Ascending aorta (tissue), 2 donors: ENCODE measurements at regions of chr22 and their contacts with region 1.

Region 1: DNA sequence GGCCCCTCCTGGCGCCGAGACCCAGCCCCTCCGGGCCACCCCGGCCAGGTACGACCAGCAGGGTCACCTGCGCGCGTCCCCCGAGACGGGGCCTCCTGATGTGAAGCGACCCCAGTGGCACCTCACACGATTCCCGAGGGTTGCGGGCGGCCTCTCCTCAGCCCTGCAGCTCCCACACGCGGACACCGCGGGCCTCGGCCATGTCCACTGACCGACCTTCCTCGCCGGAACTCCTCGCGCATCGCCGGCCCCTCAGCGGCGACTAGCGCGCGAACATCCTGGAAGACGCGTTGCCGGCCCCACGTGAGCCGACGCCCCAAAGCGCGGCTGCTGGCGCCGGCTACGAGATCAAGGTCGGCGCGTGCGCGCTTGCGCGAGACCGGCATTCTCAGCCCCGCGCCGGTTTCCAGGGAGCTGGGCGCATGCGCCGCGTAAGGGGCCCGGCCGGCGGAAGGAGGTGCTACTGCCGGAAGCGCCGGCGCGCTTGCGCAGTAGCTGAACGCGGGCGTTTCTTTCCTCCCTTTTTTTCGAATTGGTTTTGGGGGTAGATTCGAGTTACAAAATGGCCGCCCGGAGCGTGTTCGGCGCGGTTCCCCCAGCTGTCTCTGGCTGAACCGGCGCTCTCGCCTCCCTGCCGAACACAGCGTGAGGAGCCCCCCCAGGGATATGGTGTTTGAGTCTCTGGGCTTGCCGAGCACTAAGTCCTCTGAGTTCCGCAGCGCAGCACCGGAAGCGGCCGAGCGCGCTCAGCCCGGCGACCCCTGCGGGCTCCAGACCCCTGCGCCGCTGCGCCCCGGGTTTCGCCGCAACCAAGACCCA is at the start of gene NUP50:
- DNase-seq: peak; percentile 72 to 96
- H3K4me3 ChIP-seq: peak within 1 kb of the TSS; percentile 96 to 100
- H3K27ac ChIP-seq: peak within 1 kb of the TSS; percentile 74 to 81
- H3K4me1 ChIP-seq: peaks cover 0 to 19% of the 10 kb centered on the region in 2 donors
- H3K27me3 ChIP-seq: no peaks in the 10 kb centered on the region
- CTCF ChIP-seq: peak; percentile 12 to 19 (median 18)
- total RNA-seq, gene NUP50: 75.8 TPM

Region 2: DNA sequence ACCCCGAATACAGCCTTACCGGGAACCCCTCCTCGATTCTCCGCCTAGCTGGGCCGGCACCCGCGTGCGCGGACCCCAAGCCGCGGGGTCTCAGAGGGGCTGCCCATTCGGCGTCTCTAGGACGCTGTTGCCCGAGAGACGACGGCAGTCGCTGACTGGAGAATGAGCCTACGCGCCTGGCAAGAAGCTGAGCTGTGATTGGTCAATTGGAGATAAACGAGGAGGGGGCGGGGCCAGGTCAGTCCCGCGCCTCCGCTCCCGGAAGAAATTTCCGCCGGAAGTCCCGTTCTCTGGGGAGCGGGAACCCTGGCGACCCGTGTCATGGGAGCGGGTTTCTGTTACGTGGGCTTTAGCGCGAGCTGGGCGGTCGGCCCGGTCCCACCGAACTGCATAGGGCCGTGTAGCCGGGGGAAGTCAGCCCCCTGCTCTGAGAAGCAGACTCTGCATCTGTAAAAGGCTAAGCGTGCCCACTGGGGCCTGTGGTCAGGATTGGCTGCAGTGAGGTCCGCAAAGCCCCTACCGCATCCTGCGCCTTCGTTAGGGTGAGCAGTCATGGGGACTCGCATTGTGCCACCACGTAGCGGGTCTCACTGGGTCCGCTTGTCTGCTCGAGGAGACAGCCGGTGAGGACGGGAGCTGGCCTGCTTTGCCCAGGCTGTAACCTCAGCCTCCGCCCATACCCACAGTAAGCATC is 1351.4 kb before region 1 on chr22 and contains the start of gene EFCAB6:
- intact Hi-C with region 1: loop called (anchors 10 kb)
- DNase-seq: peak; percentile 65 to 94
- H3K4me3 ChIP-seq: peak within 1 kb of the TSS; percentile 82 to 89
- H3K27ac ChIP-seq: peak within 1 kb of the TSS; percentile 63 to 81
- H3K4me1 ChIP-seq: peaks cover 3 to 7% of the 10 kb centered on the region in 2 donors
- H3K27me3 ChIP-seq: no peaks in the 10 kb centered on the region
- CTCF ChIP-seq: no peak
- total RNA-seq, gene EFCAB6: 8.6 TPM

Region 3: GRCh38 chr22:44497218-44497904 is 666.3 kb before region 1 on chr22:
- intact Hi-C with region 1: loop called (anchors 10 kb)
- DNase-seq: no peak
- H3K4me3 ChIP-seq: peak overlapping the region; percentile 97 to 100
- H3K27ac ChIP-seq: peak overlapping the region; percentile 81 to 88
- H3K4me1 ChIP-seq: peaks cover 4 to 10% of the 10 kb centered on the region in 2 donors
- H3K27me3 ChIP-seq: no peaks in the 10 kb centered on the region
- CTCF ChIP-seq: no peak

Region 4: DNA sequence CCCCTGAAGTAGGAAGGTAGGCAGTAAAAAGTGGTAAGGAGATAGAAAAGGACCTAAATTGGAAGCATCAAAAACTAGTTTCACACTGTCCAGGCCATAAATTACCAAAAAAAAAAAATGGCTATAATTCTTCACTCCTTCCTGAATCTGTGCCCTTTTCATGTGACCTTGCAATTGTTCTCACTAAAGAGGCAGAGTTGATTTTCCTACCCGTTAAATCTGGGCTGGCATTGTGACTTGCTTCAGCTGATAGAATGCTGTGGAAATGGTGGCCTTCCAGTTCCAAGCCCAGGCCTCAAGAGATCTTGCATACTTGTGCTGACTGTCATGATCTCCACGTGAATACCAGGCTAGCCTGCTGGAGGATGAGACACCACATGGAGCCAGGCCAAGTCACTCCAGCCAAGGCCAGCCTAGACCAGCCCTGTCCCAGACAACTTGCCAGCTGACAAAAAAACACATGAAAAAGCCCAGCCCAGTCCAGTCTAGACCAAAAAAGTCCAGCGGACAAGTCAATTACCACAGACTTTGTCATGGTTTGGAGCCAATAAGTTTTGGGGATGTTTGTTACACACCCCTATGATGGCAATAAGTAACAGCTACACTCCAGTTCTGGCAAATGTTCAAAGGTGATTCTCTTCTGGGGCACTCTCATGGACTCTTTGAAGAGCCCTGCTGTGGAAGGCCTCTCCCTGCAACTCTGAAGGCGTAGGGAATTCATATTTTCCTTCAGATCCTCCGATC is 51.4 kb before region 1 on chr22:
- intact Hi-C with region 1: no loop called
- DNase-seq: no peak
- H3K4me3 ChIP-seq: no peak overlapping the region
- H3K27ac ChIP-seq: no peak overlapping the region
- H3K4me1 ChIP-seq: no peaks in the 10 kb centered on the region
- H3K27me3 ChIP-seq: no peaks in the 10 kb centered on the region
- CTCF ChIP-seq: no peak

Region 5: GRCh38 chr22:45212306-45212709 is 48.6 kb after region 1 on chr22:
- intact Hi-C with region 1: loop called (anchors 2 kb)
- DNase-seq: peak; percentile 71 to 95
- H3K4me3 ChIP-seq: peak overlapping the region; percentile 56 to 59
- H3K27ac ChIP-seq: peak overlapping the region; percentile 70 to 71
- H3K4me1 ChIP-seq: peaks cover 14 to 43% of the 10 kb centered on the region in 2 donors
- H3K27me3 ChIP-seq: no peaks in the 10 kb centered on the region
- CTCF ChIP-seq: no peak

Region 6: GRCh38 chr22:45240810-45241631 is 77.4 kb after region 1 on chr22 and contains the start of gene KIAA0930:
- intact Hi-C with region 1: loop called (anchors 2 kb)
- DNase-seq: peak; percentile 54 to 91
- H3K4me3 ChIP-seq: peak within 1 kb of the TSS; percentile 69 to 95
- H3K27ac ChIP-seq: peak within 1 kb of the TSS; percentile 69 to 76
- H3K4me1 ChIP-seq: peaks cover 8 to 19% of the 10 kb centered on the region in 2 donors
- H3K27me3 ChIP-seq: no peaks in the 10 kb centered on the region
- CTCF ChIP-seq: no peak
- total RNA-seq, gene KIAA0930: 60.0 TPM

Region 7: DNA sequence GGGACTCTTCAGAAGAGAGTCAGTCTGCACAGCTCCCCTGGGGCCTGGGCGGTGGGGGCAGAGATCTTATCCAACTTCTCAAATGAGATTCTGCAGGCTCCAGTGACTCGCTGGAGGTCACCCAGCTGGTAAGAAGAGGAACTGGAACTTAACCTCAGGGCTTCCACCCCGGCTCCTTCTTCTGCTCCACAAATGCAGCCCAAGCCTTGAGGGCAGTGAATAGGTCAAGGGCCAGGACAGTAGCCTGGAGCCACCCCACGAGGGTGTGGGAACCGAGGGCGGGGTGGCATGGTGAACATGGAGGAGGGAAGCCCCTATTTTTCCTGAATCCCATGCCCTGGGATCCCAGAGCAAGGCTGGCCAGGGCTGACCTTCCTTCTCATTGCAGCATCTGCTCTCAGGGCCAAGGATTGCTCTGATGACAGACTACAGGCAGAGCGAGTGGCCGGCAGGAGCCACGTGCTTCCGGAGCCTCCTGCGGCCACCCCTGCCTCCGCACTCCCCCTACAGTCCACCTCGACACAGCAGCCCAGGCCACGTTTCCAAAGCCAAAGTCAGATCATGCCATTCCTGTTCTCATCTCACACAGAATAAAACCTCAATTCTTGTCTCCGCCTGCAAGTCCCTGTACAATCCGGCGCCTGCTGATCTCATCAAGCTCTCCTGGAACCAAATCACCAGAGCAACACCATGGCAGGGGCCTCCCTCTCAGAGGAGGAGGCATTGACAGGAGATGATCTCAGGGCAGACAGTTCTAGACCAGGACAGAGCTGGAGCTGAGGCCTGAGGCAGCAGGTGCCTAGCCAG is 100.0 kb after region 1 on chr22:
- intact Hi-C with region 1: loop called (anchors 5 kb)
- DNase-seq: peak in 1 of 2 donors; percentile 85
- H3K4me3 ChIP-seq: no peak overlapping the region
- H3K27ac ChIP-seq: no peak overlapping the region
- H3K4me1 ChIP-seq: peaks cover under 1 to 4% of the 10 kb centered on the region in 2 donors
- H3K27me3 ChIP-seq: no peaks in the 10 kb centered on the region
- CTCF ChIP-seq: peak; percentile 67 to 72 (median 72)